Heart right ventricle (tissue), 16 donors: ENCODE measurements at regions of chr4 and their contacts with region 1.

Region 1: DNA sequence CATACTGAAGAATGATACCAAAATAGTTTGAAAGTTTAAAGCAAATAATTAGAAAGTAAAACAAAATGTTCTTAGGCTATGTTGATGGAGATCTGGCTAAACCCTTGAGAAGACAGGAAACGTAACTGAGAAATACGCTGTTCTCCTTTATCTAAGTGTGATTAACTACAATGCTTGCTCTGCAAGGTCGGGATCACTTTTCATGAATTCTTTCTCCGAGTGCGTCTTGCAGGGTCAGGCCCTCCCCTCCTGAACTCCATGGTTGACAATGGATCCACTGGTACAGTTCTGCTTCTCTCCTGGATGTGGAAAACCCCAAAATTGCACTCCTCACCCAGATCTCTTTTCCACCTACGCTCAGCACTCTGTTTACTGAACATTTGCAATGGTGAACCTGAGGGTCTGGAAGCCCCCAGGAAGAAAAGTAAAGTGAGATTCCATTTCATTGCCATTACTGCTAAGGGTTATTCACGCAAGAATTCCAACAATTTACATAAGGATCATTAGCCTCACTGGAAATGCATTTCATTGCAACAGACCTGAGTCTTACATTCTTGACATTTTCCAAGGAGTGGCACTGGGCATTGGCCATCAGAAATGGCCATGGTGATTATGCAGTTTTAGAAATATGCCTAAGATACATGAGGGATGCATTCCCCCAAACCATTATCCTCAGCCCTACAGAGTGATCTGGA is 24.6 kb upstream of the WWC2 start:
- DNase-seq: no peak
- ATAC-seq: no peak
- H3K4me3 ChIP-seq: no peak overlapping the region
- H3K27ac ChIP-seq: no peak overlapping the region
- H3K4me1 ChIP-seq: no peaks in the 10 kb centered on the region
- H3K27me3 ChIP-seq: no peaks in the 10 kb centered on the region
- CTCF ChIP-seq: no peak

Region 2: GRCh38 chr4:183249857-183250256 is 175.4 kb after region 1 on chr4:
- intact Hi-C with region 1: loop called in 4 of 10 experiments (anchors 2 to 5 kb)
- DNase-seq: no peak
- ATAC-seq: peak in 5 of 8 donors; percentile 47 to 76 (median 61)
- H3K4me3 ChIP-seq: no peak overlapping the region
- H3K27ac ChIP-seq: no peak overlapping the region
- H3K4me1 ChIP-seq: no peaks in the 10 kb centered on the region
- H3K27me3 ChIP-seq: no peaks in the 10 kb centered on the region
- CTCF ChIP-seq: peak in 8 of 9 donors; percentile 11 to 62 (median 45)

Region 3: DNA sequence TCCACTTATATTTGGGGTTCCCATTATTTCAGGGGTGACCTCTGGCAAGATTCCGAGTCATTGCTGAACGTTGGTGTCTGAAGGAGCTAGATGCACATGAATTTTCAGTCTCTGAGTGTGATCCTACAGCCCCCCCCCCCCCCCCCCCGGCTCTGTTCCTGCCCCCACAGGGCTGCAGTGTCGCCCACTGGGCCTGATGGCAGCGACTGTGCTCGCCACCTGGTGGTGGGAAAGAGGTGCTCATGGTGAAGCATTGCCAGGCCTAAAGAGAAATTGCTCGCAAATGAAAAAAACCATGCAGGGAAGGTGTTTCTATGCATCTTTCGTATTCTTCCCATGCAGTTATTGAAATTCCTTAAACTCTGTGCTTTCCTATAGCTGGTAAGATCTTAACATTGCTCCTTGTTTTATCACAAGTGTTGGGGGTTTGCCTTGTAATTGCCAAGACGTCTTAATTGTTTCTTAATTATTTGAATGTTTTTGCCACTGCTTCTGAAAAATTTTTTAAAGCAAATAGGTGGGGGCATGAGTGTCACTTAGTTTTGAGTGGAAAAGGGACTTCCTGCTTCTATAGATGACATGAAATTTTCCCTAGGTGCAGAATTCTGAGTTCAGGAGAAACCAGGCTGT is 182.4 kb after region 1 on chr4:
- intact Hi-C with region 1: loop called in 9 of 10 experiments (anchors 1 to 5 kb)
- DNase-seq: peak; percentile 35 to 59
- ATAC-seq: peak; percentile 77 to 90 (median 86)
- H3K4me3 ChIP-seq: no peak overlapping the region
- H3K27ac ChIP-seq: no peak overlapping the region
- H3K4me1 ChIP-seq: peaks cover 0 to 10% (median 3%) of the 10 kb centered on the region in 9 donors
- H3K27me3 ChIP-seq: no peaks in the 10 kb centered on the region
- CTCF ChIP-seq: peak; percentile 63 to 82 (median 79)

Region 4: DNA sequence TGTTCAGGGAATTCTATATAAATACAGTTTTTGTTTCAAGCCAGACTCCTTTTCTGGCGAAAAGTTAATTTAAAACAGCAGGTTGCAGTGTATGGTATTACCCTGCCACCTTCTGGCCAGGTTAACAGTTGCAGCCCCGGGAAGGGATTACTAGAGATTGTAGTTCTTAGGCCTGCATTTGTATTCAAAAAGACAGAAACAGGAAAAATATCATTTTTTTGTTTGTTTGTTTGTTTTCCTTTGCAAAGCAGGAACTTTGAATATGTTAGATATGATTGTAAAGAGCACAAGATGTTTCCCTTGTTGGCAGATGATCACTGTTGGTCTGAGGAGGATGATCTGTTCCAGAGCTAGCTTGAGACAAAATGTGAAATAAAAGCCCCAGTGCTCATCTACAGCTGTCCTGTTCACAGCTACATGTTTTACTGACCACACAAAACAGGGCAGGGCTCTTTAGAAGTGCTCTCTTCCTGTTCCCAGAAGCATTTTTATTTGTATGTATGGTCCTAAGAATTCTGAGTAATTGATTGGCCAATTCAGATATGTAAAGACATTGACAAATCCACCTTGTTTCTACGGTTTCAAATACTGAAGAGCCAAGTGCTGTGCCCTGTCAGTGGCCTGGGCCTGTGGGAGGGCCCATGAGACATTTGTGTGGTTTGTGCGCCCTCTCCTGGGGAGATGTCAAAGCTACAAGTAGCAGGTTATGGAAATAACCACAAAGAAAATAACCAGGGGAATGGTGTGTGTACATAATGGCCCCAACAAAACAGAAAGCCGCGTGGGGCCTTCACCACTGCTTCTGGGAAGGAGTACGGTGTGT is 187.7 kb after region 1 on chr4:
- intact Hi-C with region 1: loop called in 9 of 10 experiments (anchors 1 to 5 kb)
- DNase-seq: peak; percentile 69 to 79
- ATAC-seq: peak; percentile 85 to 98 (median 93)
- H3K4me3 ChIP-seq: no peak overlapping the region
- H3K27ac ChIP-seq: peak overlapping the region in 5 of 10 donors; percentile 11 to 57 (median 43)
- H3K4me1 ChIP-seq: peaks cover 0 to 9% (median 8%) of the 10 kb centered on the region in 9 donors
- H3K27me3 ChIP-seq: no peaks in the 10 kb centered on the region
- CTCF ChIP-seq: peak; percentile 63 to 85 (median 71)